Activated CD4-positive, alpha-beta memory T cell treated with anti-CD3 and anti-CD28 coated beads, Interleukin-2, amount 10 ng/mL, durations not matched to agents 7 days and 5 days (primary cell): ENCODE measurements at regions of chr19 and their contacts with region 1.

Region 1: GRCh38 chr19:43595999-43596841 is at the starts of genes IRGQ and ZNF576:
- DNase-seq: peak; percentile 100
- H3K4me3 Mint-ChIP-seq: peak within 1 kb of the TSS; percentile 97
- H3K27ac Mint-ChIP-seq: peak within 1 kb of the TSS; percentile 92
- H3K4me1 Mint-ChIP-seq: peaks cover 41% of the 10 kb centered on the region
- H3K27me3 Mint-ChIP-seq: no peaks in the 10 kb centered on the region
- total RNA-seq, gene IRGQ: 15.3 to 16.5 TPM
- total RNA-seq, gene ZNF576: 13.2 to 13.5 TPM

Region 2: GRCh38 chr19:43446746-43447489 is 149.3 kb before region 1 on chr19:
- CTCF ChIA-PET with region 1: interaction called, 38 read pairs
- POLR2A ChIA-PET with region 1: interaction called, 3 read pairs
- DNase-seq: peak; percentile 82
- H3K4me3 Mint-ChIP-seq: no peak overlapping the region
- H3K27ac Mint-ChIP-seq: no peak overlapping the region
- H3K4me1 Mint-ChIP-seq: peaks cover 25% of the 10 kb centered on the region
- H3K27me3 Mint-ChIP-seq: no peaks in the 10 kb centered on the region

Region 3: GRCh38 chr19:43519436-43520088 is 76.7 kb before region 1 on chr19:
- CTCF ChIA-PET with region 1: interaction called, 23 read pairs
- POLR2A ChIA-PET with region 1: interaction called, 12 read pairs
- DNase-seq: peak; percentile 80
- H3K4me3 Mint-ChIP-seq: no peak overlapping the region
- H3K27ac Mint-ChIP-seq: no peak overlapping the region
- H3K4me1 Mint-ChIP-seq: peaks cover 19% of the 10 kb centered on the region
- H3K27me3 Mint-ChIP-seq: no peaks in the 10 kb centered on the region

Region 4: GRCh38 chr19:43555185-43555770 is 40.9 kb before region 1 on chr19:
- CTCF ChIA-PET with region 1: interaction called, 208 read pairs
- POLR2A ChIA-PET with region 1: interaction called, 20 read pairs
- DNase-seq: peak; percentile 86
- H3K4me3 Mint-ChIP-seq: no peak overlapping the region
- H3K27ac Mint-ChIP-seq: peak overlapping the region; percentile 1
- H3K4me1 Mint-ChIP-seq: peaks cover 10% of the 10 kb centered on the region
- H3K27me3 Mint-ChIP-seq: no peaks in the 10 kb centered on the region

Region 5: GRCh38 chr19:43584484-43584883 is 11.7 kb before region 1 on chr19:
- CTCF ChIA-PET with region 1: interaction called, 22 read pairs
- POLR2A ChIA-PET with region 1: interaction called, 28 read pairs
- DNase-seq: no peak
- H3K4me3 Mint-ChIP-seq: no peak overlapping the region
- H3K27ac Mint-ChIP-seq: peak overlapping the region; percentile 48
- H3K4me1 Mint-ChIP-seq: peaks cover 15% of the 10 kb centered on the region
- H3K27me3 Mint-ChIP-seq: no peaks in the 10 kb centered on the region